ENCODE measurements at regions of chrX and their contacts with region 1.

Region 1: GRCh38 chrX:120570011-120570600 is 9.3 kb upstream of the CUL4B start:
- DNase-seq: no peak
- ATAC-seq: no peak
- H3K4me3 ChIP-seq: no peak overlapping the region
- H3K4me3 Mint-ChIP-seq: no peak overlapping the region
- H3K27ac ChIP-seq: no peak overlapping the region
- H3K27ac Mint-ChIP-seq: no peak overlapping the region
- H3K4me1 ChIP-seq: no peaks in the 10 kb centered on the region
- H3K4me1 Mint-ChIP-seq: peaks cover 9% of the 10 kb centered on the region
- H3K27me3 ChIP-seq: no peaks in the 10 kb centered on the region
- H3K27me3 Mint-ChIP-seq: no peaks in the 10 kb centered on the region
- CTCF ChIP-seq: no peak

Region 2: GRCh38 chrX:120549483-120550452 is 20.3 kb before region 1 on chrX:
- CTCF ChIA-PET with region 1: no interaction called
- POLR2A ChIA-PET with region 1: no interaction called
- intact Hi-C with region 1: loop called in 1 of 2 experiments (anchors 2 kb)
- DNase-seq: no peak
- ATAC-seq: no peak
- H3K4me3 ChIP-seq: no peak overlapping the region
- H3K4me3 Mint-ChIP-seq: no peak overlapping the region
- H3K27ac ChIP-seq: no peak overlapping the region
- H3K27ac Mint-ChIP-seq: peak overlapping the region; percentile 3
- H3K4me1 ChIP-seq: no peaks in the 10 kb centered on the region
- H3K4me1 Mint-ChIP-seq: peaks cover 27% of the 10 kb centered on the region
- H3K27me3 ChIP-seq: no peaks in the 10 kb centered on the region
- H3K27me3 Mint-ChIP-seq: no peaks in the 10 kb centered on the region
- CTCF ChIP-seq: no peak

Region 3: GRCh38 chrX:120617996-120618630 is 48.0 kb after region 1 on chrX:
- CTCF ChIA-PET with region 1: no interaction called
- POLR2A ChIA-PET with region 1: no interaction called
- intact Hi-C with region 1: no loop called
- DNase-seq: no peak
- ATAC-seq: no peak
- H3K4me3 ChIP-seq: no peak overlapping the region
- H3K4me3 Mint-ChIP-seq: no peak overlapping the region
- H3K27ac ChIP-seq: no peak overlapping the region
- H3K27ac Mint-ChIP-seq: no peak overlapping the region
- H3K4me1 ChIP-seq: no peaks in the 10 kb centered on the region
- H3K4me1 Mint-ChIP-seq: no peaks in the 10 kb centered on the region
- H3K27me3 ChIP-seq: no peaks in the 10 kb centered on the region
- H3K27me3 Mint-ChIP-seq: no peaks in the 10 kb centered on the region
- CTCF ChIP-seq: no peak